ENCODE measurements at regions of chr10 and their contacts with region 1.

Region 1: DNA sequence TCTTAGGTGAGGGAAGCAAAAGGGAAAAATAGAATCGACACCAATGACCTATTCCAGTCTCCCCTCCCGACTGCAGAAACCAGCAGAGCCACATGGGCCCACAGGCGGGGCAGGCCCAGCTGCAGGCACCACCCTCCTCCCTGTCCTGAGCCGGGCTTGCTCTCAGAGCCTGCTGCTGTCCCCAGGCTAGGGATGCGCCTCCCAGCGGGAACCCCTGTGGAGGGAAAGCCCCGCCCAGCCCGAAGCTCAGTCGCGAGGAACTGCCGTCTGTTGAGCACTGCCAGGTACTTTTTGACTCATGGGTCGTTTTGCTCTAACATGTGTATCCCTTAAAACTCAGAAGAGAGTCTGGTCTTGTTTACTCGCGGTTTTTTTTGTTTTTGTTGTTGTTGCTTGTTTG is 124.5 kb upstream of the RET start:
- DNase-seq: no peak
- ATAC-seq: peak; percentile 84

Region 2: DNA sequence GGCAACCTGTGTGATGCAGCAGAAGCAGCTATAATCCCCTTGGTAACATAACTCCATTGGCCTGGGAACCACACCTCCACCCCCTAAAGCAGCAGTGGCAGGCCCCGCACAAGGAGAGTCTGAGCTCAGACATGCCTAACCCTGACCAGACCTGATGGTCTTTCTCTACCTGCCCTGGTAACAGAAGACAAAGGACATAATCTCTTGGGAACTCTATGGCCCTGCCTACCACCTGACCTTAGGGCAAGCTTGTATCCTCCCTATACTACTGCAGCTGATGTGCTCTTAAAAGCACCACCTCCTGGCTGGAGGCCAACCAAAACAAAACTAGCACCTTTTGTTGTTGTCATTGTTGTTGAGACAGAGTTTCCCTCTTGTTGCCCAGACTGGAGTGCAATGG is 49.0 kb before region 1 on chr10:
- intact Hi-C with region 1: no loop called
- DNase-seq: no peak
- ATAC-seq: no peak

Region 3: DNA sequence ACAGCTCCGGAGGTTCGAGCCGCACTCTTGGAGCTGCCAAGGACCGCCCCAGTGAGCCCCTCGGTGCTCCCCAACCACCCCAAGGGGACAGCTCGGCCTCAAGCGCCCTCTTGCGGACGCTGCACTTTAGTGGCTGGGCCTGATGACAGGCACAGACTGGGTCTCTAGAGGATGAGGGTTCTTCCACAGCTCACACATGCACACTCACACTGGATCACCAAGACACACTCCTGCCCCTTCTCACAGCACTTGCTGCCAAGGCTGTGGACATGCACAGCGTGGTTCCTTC is 126.6 kb after region 1 on chr10:
- intact Hi-C with region 1: loop called (anchors 5 kb)
- DNase-seq: peak; percentile 81
- ATAC-seq: peak; percentile 56

Measured in Right ventricle myocardium inferior (tissue), 1 donor.